GM10248 (cell line): ENCODE measurements at regions of chr15 and their contacts with region 1.

Region 1: GRCh38 chr15:45457641-45458433 is 64.7 kb downstream of the SLC30A4 start:
- DNase-seq: peak; percentile 67
- CTCF ChIP-seq: peak; percentile 72

Region 2: GRCh38 chr15:45424429-45424828 is 33.4 kb before region 1 on chr15:
- CTCF ChIA-PET with region 1: interaction called, 120 read pairs
- POLR2A ChIA-PET with region 1: interaction called, 3 read pairs
- DNase-seq: no peak
- CTCF ChIP-seq: no peak

Region 3: DNA sequence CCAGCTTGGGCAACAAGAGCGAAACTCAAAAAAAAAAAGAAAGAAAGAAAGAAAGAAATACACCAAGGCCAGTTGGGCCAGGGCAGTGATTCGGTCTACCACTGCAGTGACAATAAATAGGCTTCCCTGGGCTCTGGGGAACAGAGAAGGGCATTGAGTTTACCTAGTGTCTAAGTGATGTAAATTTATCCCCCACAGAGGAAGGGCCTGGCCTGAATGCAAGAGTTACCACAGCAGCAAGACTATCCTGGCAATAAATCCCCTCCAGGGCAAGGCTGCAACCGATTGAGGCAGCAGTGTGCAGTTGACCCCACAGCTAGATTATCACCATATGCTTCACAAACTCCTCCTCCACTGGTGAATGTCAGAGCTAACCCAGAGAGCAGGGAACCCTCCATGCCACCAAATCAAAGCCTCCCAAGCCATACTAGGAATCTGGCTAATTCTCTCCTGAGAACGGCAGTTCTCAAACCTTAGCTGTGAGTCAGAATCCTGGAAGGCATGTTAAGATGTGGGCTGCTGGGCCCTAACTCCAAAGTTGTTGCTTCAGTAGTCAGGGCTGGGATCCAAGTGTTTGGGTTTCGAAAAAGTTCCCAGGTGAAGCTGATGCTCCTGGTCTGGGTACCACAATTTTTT is 15.2 kb before region 1 on chr15:
- CTCF ChIA-PET with region 1: interaction called, 46 read pairs
- POLR2A ChIA-PET with region 1: no interaction called
- DNase-seq: no peak
- CTCF ChIP-seq: no peak

Region 4: GRCh38 chr15:45539680-45540079 is 81.8 kb after region 1 on chr15:
- CTCF ChIA-PET with region 1: no interaction called
- POLR2A ChIA-PET with region 1: no interaction called
- DNase-seq: no peak
- CTCF ChIP-seq: no peak

Region 5: GRCh38 chr15:45587095-45587860 is 129.4 kb after region 1 on chr15 and contains the start of gene BLOC1S6:
- CTCF ChIA-PET with region 1: interaction called, 28 read pairs
- POLR2A ChIA-PET with region 1: no interaction called
- DNase-seq: peak; percentile 84
- CTCF ChIP-seq: no peak

Region 6: GRCh38 chr15:45714590-45715488 is 257.0 kb after region 1 on chr15:
- CTCF ChIA-PET with region 1: no interaction called
- POLR2A ChIA-PET with region 1: no interaction called
- DNase-seq: no peak
- CTCF ChIP-seq: peak; percentile 60

Region 7: DNA sequence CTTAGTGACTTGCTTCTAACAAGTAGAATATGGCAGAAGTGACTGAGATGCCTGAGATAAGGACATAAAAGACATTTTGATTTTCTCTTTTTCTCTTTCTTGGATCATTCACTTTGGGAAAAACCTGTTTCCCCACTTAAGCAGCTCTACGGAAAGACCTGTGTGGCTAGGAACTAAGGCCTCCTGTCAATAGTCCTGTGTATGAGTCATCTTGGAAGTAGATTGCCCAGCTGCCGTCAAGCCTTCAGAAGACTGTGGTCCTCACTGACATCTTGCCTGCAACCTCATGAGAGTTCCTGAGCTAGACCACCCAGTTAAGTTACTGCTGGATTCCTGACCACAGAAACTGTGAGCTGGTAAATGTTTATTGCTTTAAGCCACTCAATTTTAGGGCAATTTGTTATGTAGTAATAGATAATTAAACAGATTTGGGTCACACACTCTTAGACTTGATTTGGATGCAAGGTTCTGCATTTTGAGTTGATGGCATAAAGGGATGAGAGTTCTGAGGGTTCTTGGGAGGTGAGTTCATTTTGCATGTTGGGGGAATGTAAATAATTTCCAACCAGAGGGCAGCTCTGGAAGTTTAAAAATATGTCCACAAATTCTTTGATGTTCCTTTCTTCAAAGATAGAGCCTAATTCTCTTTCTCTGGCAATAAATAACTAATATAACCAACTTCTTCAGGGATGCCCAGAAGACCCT is 406.2 kb after region 1 on chr15:
- CTCF ChIA-PET with region 1: no interaction called
- POLR2A ChIA-PET with region 1: no interaction called
- DNase-seq: no peak
- CTCF ChIP-seq: no peak